AG04450 (cell line): ENCODE measurements at regions of chr11 and their contacts with region 1.

Region 1: DNA sequence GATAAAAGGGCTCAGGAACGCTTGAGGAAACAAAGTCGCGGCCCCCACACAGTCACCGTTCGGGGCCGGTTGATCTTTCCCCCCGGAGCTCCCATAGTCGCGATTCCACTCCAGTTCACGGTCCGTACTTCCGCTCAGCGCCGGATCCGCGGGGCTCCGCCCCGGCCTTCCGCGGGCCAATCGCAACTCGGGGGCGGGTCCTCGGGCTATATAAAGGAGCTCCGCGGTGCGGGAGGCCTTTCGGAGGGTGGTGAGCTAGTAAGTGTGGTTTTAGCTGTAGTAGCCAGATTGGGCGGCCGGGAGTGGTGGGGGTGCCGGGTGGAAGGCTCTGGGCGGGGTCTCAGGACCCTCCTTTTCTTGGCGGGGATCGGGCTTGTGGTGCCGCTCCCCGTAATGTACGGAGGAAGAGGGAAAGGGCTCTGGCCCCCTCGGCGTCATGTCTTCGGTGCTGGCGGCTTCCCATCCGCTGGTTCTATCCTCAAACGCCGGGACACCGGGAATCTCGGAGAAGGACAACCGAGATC is at the starts of genes C11orf98 and CSKMT:
- DNase-seq: peak; percentile 88
- H3K4me3 ChIP-seq: peak within 1 kb of the TSS; percentile 96
- H3K27ac ChIP-seq: peak within 1 kb of the TSS; percentile 90
- H3K27me3 ChIP-seq: no peaks in the 10 kb centered on the region
- CTCF ChIP-seq: no peak
- polyA plus RNA-seq, gene C11orf98: 38.8 and 43.6 TPM in 2 replicates
- polyA plus RNA-seq, gene CSKMT: 4.6 and 4.7 TPM in 2 replicates

Region 2: GRCh38 chr11:62269650-62270278 is 395.4 kb before region 1 on chr11 and contains the start of gene SCGB2A2:
- CTCF ChIA-PET with region 1: no interaction called
- POLR2A ChIA-PET with region 1: no interaction called
- DNase-seq: no peak
- H3K4me3 ChIP-seq: no peak within 1 kb of the TSS
- H3K27ac ChIP-seq: no peak within 1 kb of the TSS
- H3K27me3 ChIP-seq: no peaks in the 10 kb centered on the region
- CTCF ChIP-seq: no peak
- polyA plus RNA-seq, gene SCGB2A2: not detected in 2 replicates

Region 3: GRCh38 chr11:62591448-62592145 is 73.5 kb before region 1 on chr11 and contains the start of gene TUT1:
- CTCF ChIA-PET with region 1: interaction called, 3 read pairs
- POLR2A ChIA-PET with region 1: interaction called, 32 read pairs
- DNase-seq: peak; percentile 97
- H3K4me3 ChIP-seq: peak within 1 kb of the TSS; percentile 68
- H3K27ac ChIP-seq: peak within 1 kb of the TSS; percentile 87
- H3K27me3 ChIP-seq: no peaks in the 10 kb centered on the region
- CTCF ChIP-seq: no peak
- polyA plus RNA-seq, gene TUT1: 7.8 and 9.0 TPM in 2 replicates

Region 4: GRCh38 chr11:62645956-62646824 is 18.9 kb before region 1 on chr11 and contains the start of gene GANAB:
- CTCF ChIA-PET with region 1: interaction called, 3 read pairs
- POLR2A ChIA-PET with region 1: interaction called, 150 read pairs
- DNase-seq: peak; percentile 93
- H3K4me3 ChIP-seq: peak within 1 kb of the TSS; percentile 93
- H3K27ac ChIP-seq: peak within 1 kb of the TSS; percentile 94
- H3K27me3 ChIP-seq: no peaks in the 10 kb centered on the region
- CTCF ChIP-seq: no peak
- polyA plus RNA-seq, gene GANAB: 369 and 464 TPM in 2 replicates

Region 5: GRCh38 chr11:62689421-62690183 is 24.5 kb after region 1 on chr11 and contains the start of gene LRRN4CL:
- CTCF ChIA-PET with region 1: interaction called, 5 read pairs
- POLR2A ChIA-PET with region 1: interaction called, 35 read pairs
- DNase-seq: peak; percentile 85
- H3K4me3 ChIP-seq: peak within 1 kb of the TSS; percentile 48
- H3K27ac ChIP-seq: peak within 1 kb of the TSS; percentile 92
- H3K27me3 ChIP-seq: no peaks in the 10 kb centered on the region
- CTCF ChIP-seq: no peak
- polyA plus RNA-seq, gene LRRN4CL: 4.1 and 5.7 TPM in 2 replicates

Region 6: GRCh38 chr11:62726915-62727763 is 62.0 kb after region 1 on chr11 and contains the start of gene HNRNPUL2:
- CTCF ChIA-PET with region 1: interaction called, 6 read pairs
- POLR2A ChIA-PET with region 1: interaction called, 30 read pairs
- DNase-seq: peak; percentile 99
- H3K4me3 ChIP-seq: peak within 1 kb of the TSS; percentile 99
- H3K27ac ChIP-seq: peak within 1 kb of the TSS; percentile 98
- H3K27me3 ChIP-seq: no peaks in the 10 kb centered on the region
- CTCF ChIP-seq: 0 out of 2 replicates have a peak, but pooled peaks have one; percentile 11
- polyA plus RNA-seq, gene HNRNPUL2: 26.6 and 28.2 TPM in 2 replicates

Region 7: DNA sequence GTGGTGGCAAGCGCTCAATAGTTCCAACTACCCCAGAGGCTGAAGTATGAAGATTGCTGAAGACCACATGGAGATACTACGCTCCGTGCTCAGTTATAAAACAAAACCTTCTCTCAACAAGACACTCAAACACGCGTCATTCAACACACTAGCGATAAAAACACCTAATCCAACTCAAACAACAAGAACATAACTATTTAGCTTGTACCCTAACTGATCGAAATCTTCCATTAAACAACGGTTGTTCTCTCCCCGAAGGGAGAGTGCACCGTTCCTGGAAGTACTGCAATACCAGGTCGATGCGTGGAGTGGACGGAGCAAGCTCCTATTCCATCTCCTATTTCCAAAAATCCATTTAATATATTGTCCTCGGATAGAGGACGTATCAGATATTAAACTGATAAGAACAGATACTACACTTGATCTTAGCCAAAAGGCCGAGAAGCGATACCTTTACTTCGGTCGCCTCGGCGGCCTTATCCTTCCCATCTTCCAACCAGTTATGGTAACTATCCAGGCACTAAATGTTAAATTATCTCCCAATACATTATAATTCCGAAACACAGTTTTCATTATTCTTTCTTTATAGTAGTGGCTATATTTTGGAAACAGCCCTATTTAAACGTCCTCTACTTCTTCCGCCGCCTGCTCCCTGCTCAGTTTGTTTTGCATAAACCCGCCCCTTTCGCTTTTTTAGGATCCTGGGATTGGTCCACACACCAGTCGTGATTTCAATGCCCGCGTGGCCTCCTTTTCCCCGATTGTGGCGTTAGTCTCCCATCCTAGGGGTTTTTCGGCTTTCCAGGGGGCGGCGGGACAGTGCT is 176.4 kb after region 1 on chr11:
- CTCF ChIA-PET with region 1: interaction called, 13 read pairs
- POLR2A ChIA-PET with region 1: interaction called, 17 read pairs
- DNase-seq: peak; percentile 99
- H3K4me3 ChIP-seq: peak overlapping the region; percentile 50
- H3K27ac ChIP-seq: peak overlapping the region; percentile 97
- H3K27me3 ChIP-seq: no peaks in the 10 kb centered on the region
- CTCF ChIP-seq: no peak